WTC11 (cell line): ENCODE measurements at regions of chr14 and their contacts with region 1.

Region 1: GRCh38 chr14:37150414-37150813 is 22.0 kb downstream of the SLC25A21 start:
- DNase-seq: no peak
- ATAC-seq: peak; percentile 68
- H3K4me3 Mint-ChIP-seq: no peak overlapping the region
- H3K27ac Mint-ChIP-seq: no peak overlapping the region
- H3K4me1 Mint-ChIP-seq: no peaks in the 10 kb centered on the region
- H3K27me3 Mint-ChIP-seq: no peaks in the 10 kb centered on the region
- CTCF ChIP-seq: peak; percentile 63

Region 2: GRCh38 chr14:37116933-37117849 is 33.2 kb before region 1 on chr14:
- CTCF ChIA-PET with region 1: interaction called, 15 read pairs
- POLR2A ChIA-PET with region 1: no interaction called
- DNase-seq: no peak
- ATAC-seq: peak; percentile 46; the same call in 1 of the 2 replicates
- H3K4me3 Mint-ChIP-seq: no peak overlapping the region
- H3K27ac Mint-ChIP-seq: no peak overlapping the region
- H3K4me1 Mint-ChIP-seq: peaks cover 18% of the 10 kb centered on the region
- H3K27me3 Mint-ChIP-seq: no peaks in the 10 kb centered on the region
- CTCF ChIP-seq: no peak

Region 3: GRCh38 chr14:37167151-37168047 is 17.0 kb after region 1 on chr14:
- CTCF ChIA-PET with region 1: interaction called, 11 read pairs
- POLR2A ChIA-PET with region 1: interaction called, 4 read pairs
- DNase-seq: peak; percentile 63
- ATAC-seq: peak; percentile 57
- H3K4me3 Mint-ChIP-seq: no peak overlapping the region
- H3K27ac Mint-ChIP-seq: peak overlapping the region; percentile 73
- H3K4me1 Mint-ChIP-seq: peaks cover 50% of the 10 kb centered on the region
- H3K27me3 Mint-ChIP-seq: no peaks in the 10 kb centered on the region; the same call in 1 of the 2 replicates
- CTCF ChIP-seq: no peak

Region 4: GRCh38 chr14:37623423-37623951 is 473.1 kb after region 1 on chr14:
- CTCF ChIA-PET with region 1: no interaction called
- POLR2A ChIA-PET with region 1: no interaction called
- DNase-seq: no peak
- ATAC-seq: no peak
- H3K4me3 Mint-ChIP-seq: no peak overlapping the region
- H3K27ac Mint-ChIP-seq: no peak overlapping the region
- H3K4me1 Mint-ChIP-seq: peaks cover 4% of the 10 kb centered on the region
- H3K27me3 Mint-ChIP-seq: peaks cover 75% of the 10 kb centered on the region
- CTCF ChIP-seq: no peak